Activated CD4-positive, alpha-beta memory T cell treated with anti-CD3 and anti-CD28 coated beads for 36 hours (primary cell): ENCODE measurements at regions of chr10 and their contacts with region 1.

Region 1: DNA sequence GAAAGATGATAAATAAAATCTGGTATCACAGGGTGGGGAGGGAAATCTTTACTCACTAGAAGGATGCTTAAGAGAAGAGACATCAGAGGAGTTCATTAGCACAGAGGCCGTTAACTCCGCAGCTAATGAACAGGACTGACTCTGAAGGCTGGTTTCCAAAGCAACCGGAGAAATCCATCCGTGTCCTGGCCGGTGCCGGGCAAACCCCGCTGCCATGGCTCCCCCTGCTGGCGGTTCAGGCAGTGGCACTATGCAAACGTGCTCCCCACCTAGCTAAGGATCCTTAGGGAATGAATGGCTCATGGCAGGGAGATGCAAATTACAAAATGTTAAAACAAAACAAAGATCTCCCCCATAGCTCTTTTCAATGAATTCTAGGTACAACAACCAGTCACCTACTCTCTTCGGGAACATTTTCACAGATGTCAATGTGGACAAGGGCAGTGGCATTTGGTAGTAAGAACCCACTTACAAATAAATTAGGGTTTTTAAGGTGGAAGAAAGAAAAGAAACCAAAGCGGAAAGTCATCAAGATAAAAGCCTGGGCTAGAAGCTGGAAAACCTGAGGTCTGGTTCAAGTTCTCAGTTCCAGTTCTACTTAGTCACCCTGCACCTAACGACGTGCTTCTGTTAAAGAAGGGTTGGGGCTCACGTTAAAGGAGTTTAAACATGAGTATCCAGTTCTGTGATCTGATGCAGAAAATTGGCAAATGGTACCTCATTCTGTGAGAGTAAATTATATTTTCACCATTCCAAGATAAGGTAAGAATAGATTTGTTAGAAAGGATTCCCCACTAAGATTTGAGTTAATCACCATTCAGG is 138.2 kb downstream of the SVIL start:
- DNase-seq: peak; percentile 74
- H3K4me3 Mint-ChIP-seq: no peak overlapping the region
- H3K27ac Mint-ChIP-seq: no peak overlapping the region
- H3K4me1 Mint-ChIP-seq: peaks cover 5% of the 10 kb centered on the region
- H3K27me3 Mint-ChIP-seq: no peaks in the 10 kb centered on the region

Region 2: DNA sequence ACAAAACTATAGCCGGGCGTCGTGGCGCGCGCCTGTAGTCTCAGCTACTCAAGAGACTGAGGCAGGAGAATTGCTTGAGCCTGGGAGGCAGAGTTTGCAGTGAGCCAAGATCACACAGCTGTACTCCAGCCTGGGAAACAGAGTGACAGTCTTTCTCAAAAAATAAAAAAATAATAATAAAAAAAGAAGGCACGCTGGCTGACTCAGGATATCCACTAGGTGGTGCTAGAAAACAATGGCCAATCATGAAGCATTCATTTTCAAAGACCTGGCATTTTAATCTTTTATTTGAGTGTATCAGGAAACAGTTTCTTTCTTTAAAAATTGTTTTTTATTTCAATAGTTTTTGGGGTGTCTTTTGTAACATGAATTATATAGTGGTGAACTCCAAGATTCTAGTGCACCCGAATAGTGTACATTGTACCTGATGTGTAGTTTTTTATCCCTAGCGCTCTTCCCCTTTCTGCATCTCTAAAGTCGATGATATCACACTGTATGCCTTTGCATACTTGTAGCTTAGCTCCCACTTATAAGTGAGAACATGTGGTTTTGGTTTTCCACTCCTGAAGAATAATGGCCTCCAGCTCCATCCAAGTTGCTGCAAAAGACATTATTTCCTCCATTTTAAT is 119.1 kb before region 1 on chr10:
- CTCF ChIA-PET with region 1: interaction called, 5 read pairs
- POLR2A ChIA-PET with region 1: no interaction called
- intact Hi-C with region 1: loop called (anchors 2 kb)
- DNase-seq: peak; percentile 12
- H3K4me3 Mint-ChIP-seq: no peak overlapping the region
- H3K27ac Mint-ChIP-seq: no peak overlapping the region
- H3K4me1 Mint-ChIP-seq: peaks cover 3% of the 10 kb centered on the region
- H3K27me3 Mint-ChIP-seq: peaks cover 4% of the 10 kb centered on the region

Region 3: DNA sequence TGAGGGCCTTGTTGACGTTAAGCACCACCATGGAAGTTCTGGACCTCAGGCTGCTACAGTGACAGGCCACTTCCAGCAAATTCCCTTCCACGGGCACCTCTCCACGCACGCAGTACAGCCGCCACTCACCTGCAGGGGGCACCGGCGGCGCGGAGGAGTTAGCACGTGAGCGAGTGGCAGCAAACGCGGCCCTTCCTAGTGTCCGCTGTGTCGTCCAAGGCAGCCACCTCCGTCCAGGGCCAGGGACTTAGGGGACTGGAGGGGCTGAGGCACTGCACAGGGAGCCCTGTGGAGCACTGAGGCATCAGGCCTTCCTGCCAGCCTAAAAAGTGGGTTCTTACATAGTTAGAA is 26.2 kb before region 1 on chr10:
- CTCF ChIA-PET with region 1: interaction called, 12 read pairs
- POLR2A ChIA-PET with region 1: no interaction called
- intact Hi-C with region 1: no loop called
- DNase-seq: no peak
- H3K4me3 Mint-ChIP-seq: no peak overlapping the region
- H3K27ac Mint-ChIP-seq: no peak overlapping the region
- H3K4me1 Mint-ChIP-seq: no peaks in the 10 kb centered on the region
- H3K27me3 Mint-ChIP-seq: no peaks in the 10 kb centered on the region

Region 4: GRCh38 chr10:29482591-29483431 is 13.7 kb before region 1 on chr10:
- CTCF ChIA-PET with region 1: interaction called, 23 read pairs
- POLR2A ChIA-PET with region 1: no interaction called
- intact Hi-C with region 1: no loop called
- DNase-seq: peak; percentile 68
- H3K4me3 Mint-ChIP-seq: no peak overlapping the region
- H3K27ac Mint-ChIP-seq: peak overlapping the region; percentile 68
- H3K4me1 Mint-ChIP-seq: peaks cover 36% of the 10 kb centered on the region
- H3K27me3 Mint-ChIP-seq: no peaks in the 10 kb centered on the region